ENCODE measurements at regions of chr22 and their contacts with region 1.

Region 1: GRCh38 chr22:42863349-42863961 is 6.4 kb upstream of the ARFGAP3 start:
- DNase-seq: peak; percentile 52
- H3K4me3 Mint-ChIP-seq: no peak overlapping the region
- H3K27ac Mint-ChIP-seq: peak overlapping the region; percentile 27
- H3K4me1 Mint-ChIP-seq: peaks cover 20% of the 10 kb centered on the region
- H3K27me3 Mint-ChIP-seq: no peaks in the 10 kb centered on the region

Region 2: DNA sequence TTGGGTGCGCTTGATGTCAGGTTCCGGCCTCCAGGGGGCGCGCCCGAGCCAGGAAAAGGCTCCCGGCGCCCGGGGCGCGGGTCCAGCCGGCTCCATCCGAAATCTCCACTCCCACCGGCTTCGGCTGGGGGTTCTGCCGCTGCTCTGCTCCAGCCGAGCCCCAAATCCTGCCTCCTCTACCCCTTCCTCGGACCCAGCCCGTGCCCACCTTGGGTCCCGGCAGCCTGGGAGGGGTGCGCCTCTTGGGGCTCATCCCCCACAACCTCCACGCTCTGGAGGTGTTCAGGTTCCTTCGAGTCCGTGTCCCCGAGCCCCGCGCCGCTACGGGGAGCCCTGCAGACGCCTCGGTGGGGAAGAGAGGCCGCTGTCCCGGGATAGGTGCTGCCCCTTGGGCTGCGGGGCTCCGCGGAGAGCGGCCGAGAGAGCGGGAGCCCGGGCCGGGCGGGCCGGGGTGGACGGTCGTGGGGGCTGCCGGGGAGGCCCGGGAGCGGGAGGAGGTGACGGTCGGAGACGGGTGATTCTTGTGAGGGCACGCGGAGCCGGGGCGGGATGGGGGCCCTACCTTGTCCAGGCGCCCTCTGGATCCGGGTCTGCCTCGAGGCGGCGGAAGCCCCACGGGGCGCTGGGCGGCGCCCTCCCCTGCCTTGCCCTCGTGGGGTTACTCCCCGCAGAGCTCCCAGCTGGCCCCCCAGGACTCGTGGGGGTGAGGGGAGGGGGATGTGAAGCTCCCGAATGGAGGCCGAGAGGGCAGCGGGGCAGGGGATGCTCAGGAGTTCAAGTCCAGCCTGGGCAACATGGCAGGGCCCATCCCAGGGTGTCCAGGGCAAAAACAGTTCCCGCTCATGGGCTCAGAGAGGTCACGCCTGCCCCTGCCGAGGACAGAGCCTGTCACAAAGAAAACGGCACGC is 201.1 kb before region 1 on chr22:
- CTCF ChIA-PET with region 1: no interaction called
- intact Hi-C with region 1: loop called (anchors 2 kb)
- DNase-seq: peak; percentile 86
- H3K4me3 Mint-ChIP-seq: peak overlapping the region; percentile 62
- H3K27ac Mint-ChIP-seq: no peak overlapping the region
- H3K4me1 Mint-ChIP-seq: peaks cover 2% of the 10 kb centered on the region
- H3K27me3 Mint-ChIP-seq: no peaks in the 10 kb centered on the region

Region 3: GRCh38 chr22:42837556-42837955 is 25.9 kb before region 1 on chr22:
- CTCF ChIA-PET with region 1: no interaction called
- intact Hi-C with region 1: no loop called
- DNase-seq: no peak
- H3K4me3 Mint-ChIP-seq: no peak overlapping the region
- H3K27ac Mint-ChIP-seq: no peak overlapping the region
- H3K4me1 Mint-ChIP-seq: peaks cover 4% of the 10 kb centered on the region
- H3K27me3 Mint-ChIP-seq: no peaks in the 10 kb centered on the region

Region 4: GRCh38 chr22:42881982-42882656 is 18.7 kb after region 1 on chr22:
- CTCF ChIA-PET with region 1: interaction called, 12 read pairs
- intact Hi-C with region 1: no loop called
- DNase-seq: no peak
- H3K4me3 Mint-ChIP-seq: no peak overlapping the region
- H3K27ac Mint-ChIP-seq: no peak overlapping the region
- H3K4me1 Mint-ChIP-seq: no peaks in the 10 kb centered on the region
- H3K27me3 Mint-ChIP-seq: no peaks in the 10 kb centered on the region

Region 5: DNA sequence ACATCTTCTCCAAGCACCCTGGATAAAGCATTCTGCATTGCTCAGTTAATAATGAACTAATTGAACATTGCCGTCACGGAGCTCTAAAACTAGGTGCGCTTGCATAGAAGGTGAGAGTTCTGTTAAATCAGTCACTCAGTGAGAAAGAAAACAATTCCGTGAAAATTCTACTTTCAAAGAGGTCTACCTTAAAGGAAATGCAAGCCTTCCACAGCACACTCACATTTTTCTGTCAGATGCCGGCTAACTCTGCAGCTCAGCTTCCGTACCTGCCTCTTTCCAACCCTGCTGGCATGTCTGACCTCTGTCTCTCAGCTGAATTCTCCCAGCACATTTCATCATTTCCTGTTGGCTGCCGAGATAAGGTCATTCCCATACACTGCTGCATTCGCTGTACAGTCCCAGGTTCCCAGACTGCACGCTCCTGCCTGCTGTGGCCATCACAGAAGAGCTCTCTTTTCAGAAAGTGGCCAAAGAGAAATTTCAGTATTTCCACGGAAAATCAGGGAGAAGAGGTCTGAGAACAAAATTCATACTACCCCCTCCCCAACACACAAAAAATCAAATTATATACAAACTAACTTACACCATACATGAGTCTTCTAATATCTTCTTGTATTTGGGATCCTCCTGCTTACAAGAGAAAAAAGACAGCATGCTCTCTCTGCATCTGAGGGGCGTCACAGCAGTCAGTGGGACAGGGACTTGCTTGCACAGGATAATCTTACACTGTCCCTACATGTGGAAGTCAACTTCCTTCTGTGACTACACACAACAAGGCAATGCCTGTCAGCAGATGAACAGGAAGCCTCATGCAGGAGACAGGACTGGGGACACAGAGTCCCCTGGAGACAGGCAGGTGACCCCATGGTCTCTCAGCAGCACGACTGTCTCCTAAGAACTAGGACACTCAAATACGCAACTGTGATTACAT is 96.4 kb after region 1 on chr22:
- CTCF ChIA-PET with region 1: interaction called, 4 read pairs
- intact Hi-C with region 1: loop called (anchors 10 kb)
- DNase-seq: peak; percentile 36
- H3K4me3 Mint-ChIP-seq: peak overlapping the region; percentile 64
- H3K27ac Mint-ChIP-seq: peak overlapping the region; percentile 26
- H3K4me1 Mint-ChIP-seq: peaks cover 68% of the 10 kb centered on the region
- H3K27me3 Mint-ChIP-seq: no peaks in the 10 kb centered on the region

Region 6: DNA sequence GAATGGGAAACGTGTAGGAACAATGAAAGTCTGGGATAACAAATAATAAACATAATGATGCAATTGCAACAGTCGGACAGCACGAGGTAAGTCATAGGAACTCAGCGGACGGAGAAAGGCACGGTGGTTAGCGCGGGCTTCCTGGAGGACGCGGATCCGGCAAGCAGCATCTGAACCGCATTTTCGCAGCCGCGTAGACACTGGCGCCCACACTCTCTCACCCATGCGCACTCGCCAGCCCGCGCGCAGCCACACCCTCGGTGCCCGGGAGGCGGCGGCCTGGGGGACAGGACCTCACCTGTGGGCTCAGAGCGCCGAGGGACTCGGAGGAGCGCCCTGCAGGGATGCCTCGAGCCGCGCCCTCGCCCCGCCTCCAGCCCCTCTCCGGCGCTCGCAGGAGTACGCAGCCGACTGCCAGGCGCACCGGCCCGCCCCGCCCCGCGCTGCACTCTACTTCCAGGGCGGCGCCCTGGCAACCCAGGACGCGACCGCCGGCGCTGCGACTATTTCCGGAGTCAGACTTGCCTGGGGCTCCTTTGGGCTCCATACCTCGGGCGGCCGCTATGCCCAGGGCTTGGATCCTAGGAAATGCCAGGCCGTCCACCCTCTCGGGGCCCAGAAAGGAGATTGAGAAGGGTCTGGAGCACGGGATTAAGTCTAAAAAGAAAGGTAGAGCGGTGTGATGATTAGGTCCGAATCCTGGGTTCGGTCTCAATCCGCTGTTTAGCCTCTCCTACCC is 225.7 kb after region 1 on chr22 and contains the start of gene TTLL1:
- CTCF ChIA-PET with region 1: interaction called, 9 read pairs
- intact Hi-C with region 1: loop called (anchors 2 kb)
- DNase-seq: peak; percentile 93
- H3K4me3 Mint-ChIP-seq: peak within 1 kb of the TSS; percentile 88
- H3K27ac Mint-ChIP-seq: peak within 1 kb of the TSS; percentile 86
- H3K4me1 Mint-ChIP-seq: peaks cover 14% of the 10 kb centered on the region
- H3K27me3 Mint-ChIP-seq: no peaks in the 10 kb centered on the region
- total RNA-seq, gene TTLL1: 7.4 TPM